ENCODE measurements at regions of chr16 and their contacts with region 1.

Region 1: GRCh38 chr16:1929578-1930337 is 11.5 kb upstream of the HS3ST6 start:
- DNase-seq: peak; percentile 83 to 99 (median 91)
- ATAC-seq: peak; percentile 100
- H3K4me3 ChIP-seq: peak overlapping the region; percentile 48
- H3K4me3 Mint-ChIP-seq: peak overlapping the region in 6 of 10 donors; percentile 30 to 82 (median 74)
- H3K27ac ChIP-seq: peak overlapping the region; percentile 64
- H3K27ac Mint-ChIP-seq: no peak overlapping the region
- H3K4me1 ChIP-seq: no peaks in the 10 kb centered on the region
- H3K4me1 Mint-ChIP-seq: peaks cover 2 to 8% (median 4%) of the 10 kb centered on the region in 7 donors
- H3K27me3 ChIP-seq: no peaks in the 10 kb centered on the region
- H3K27me3 Mint-ChIP-seq: peaks cover 0 to 3% (median 2%) of the 10 kb centered on the region in 5 donors

Region 2: GRCh38 chr16:1296688-1297412 is 632.9 kb before region 1 on chr16:
- CTCF ChIA-PET with region 1: no interaction called
- POLR2A ChIA-PET with region 1: no interaction called
- intact Hi-C with region 1: no loop called
- DNase-seq: no peak
- ATAC-seq: no peak
- H3K4me3 ChIP-seq: no peak overlapping the region
- H3K4me3 Mint-ChIP-seq: peak overlapping the region in 1 of 10 donors; percentile 5
- H3K27ac ChIP-seq: no peak overlapping the region
- H3K27ac Mint-ChIP-seq: peak overlapping the region in 1 of 9 donors; percentile 15
- H3K4me1 ChIP-seq: peaks cover 0 to 4% of the 10 kb centered on the region in 2 donors
- H3K4me1 Mint-ChIP-seq: peaks cover 0 to 9% (median 3%) of the 10 kb centered on the region in 7 donors
- H3K27me3 ChIP-seq: no peaks in the 10 kb centered on the region
- H3K27me3 Mint-ChIP-seq: peaks cover 21 to 42% (median 25%) of the 10 kb centered on the region in 5 donors

Region 3: DNA sequence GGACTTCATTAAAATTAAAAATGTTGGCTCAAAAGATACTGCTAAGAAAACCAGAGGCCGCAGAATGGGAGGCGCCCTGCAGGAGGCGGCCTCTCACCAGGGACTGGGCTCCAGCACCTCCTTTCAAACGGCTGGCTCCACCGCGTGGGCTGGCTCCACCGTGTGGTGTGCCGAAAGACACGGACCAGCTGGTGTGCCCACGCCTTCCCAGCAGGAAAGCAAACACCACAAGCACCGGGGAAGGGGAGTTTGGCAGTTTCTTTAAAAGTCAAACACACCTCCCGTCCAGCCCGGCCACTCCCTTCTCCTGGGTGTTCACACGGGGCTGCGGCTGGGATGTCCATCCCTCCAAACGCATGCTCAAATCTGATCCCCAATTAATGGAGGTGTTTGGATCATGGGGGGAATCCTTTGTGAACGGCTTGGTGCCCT is 117.0 kb before region 1 on chr16:
- CTCF ChIA-PET with region 1: no interaction called
- POLR2A ChIA-PET with region 1: no interaction called
- intact Hi-C with region 1: loop called in 1 of 2 experiments (anchors 1 kb)
- DNase-seq: peak in 8 of 9 donors; percentile 43 to 63 (median 52)
- ATAC-seq: peak; percentile 85
- H3K4me3 ChIP-seq: no peak overlapping the region
- H3K4me3 Mint-ChIP-seq: no peak overlapping the region
- H3K27ac ChIP-seq: no peak overlapping the region
- H3K27ac Mint-ChIP-seq: peak overlapping the region in 3 of 9 donors; percentile 10 to 57 (median 21)
- H3K4me1 ChIP-seq: no peaks in the 10 kb centered on the region
- H3K4me1 Mint-ChIP-seq: peaks cover 5 to 14% (median 9%) of the 10 kb centered on the region in 7 donors
- H3K27me3 ChIP-seq: no peaks in the 10 kb centered on the region
- H3K27me3 Mint-ChIP-seq: no peaks in the 10 kb centered on the region

Region 4: GRCh38 chr16:1863681-1864460 is 65.9 kb before region 1 on chr16:
- CTCF ChIA-PET with region 1: interaction called, 7 read pairs
- POLR2A ChIA-PET with region 1: no interaction called
- intact Hi-C with region 1: loop called (anchors 1 kb)
- DNase-seq: peak in 6 of 9 donors; percentile 21 to 43 (median 35)
- ATAC-seq: no peak
- H3K4me3 ChIP-seq: no peak overlapping the region
- H3K4me3 Mint-ChIP-seq: no peak overlapping the region
- H3K27ac ChIP-seq: no peak overlapping the region
- H3K27ac Mint-ChIP-seq: peak overlapping the region in 1 of 9 donors; percentile 14
- H3K4me1 ChIP-seq: no peaks in the 10 kb centered on the region
- H3K4me1 Mint-ChIP-seq: no peaks in the 10 kb centered on the region
- H3K27me3 ChIP-seq: no peaks in the 10 kb centered on the region
- H3K27me3 Mint-ChIP-seq: peaks cover 0 to 44% (median 9%) of the 10 kb centered on the region in 5 donors

Region 5: DNA sequence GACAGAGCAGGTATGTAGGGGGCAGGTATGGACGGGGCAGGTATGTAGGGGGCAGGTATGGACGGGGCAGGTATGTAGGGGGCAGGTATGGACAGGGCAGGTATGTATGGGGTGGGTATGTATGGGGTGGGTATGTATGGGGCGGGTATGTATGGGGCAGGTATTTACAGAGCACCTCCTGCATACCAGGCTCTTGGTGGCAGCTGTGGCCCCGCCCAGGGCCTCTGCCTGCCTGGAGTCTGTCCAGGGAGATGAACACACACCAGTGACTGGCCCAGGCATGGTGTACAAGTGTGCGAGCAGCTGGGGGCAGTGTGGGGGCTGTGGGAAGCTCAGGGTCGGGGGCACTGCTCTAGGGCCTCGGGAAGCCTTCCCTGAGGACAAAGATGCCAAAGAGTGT is 20.3 kb after region 1 on chr16:
- CTCF ChIA-PET with region 1: no interaction called
- POLR2A ChIA-PET with region 1: no interaction called
- intact Hi-C with region 1: no loop called
- DNase-seq: no peak
- ATAC-seq: no peak
- H3K4me3 ChIP-seq: no peak overlapping the region
- H3K4me3 Mint-ChIP-seq: no peak overlapping the region
- H3K27ac ChIP-seq: no peak overlapping the region
- H3K27ac Mint-ChIP-seq: no peak overlapping the region
- H3K4me1 ChIP-seq: no peaks in the 10 kb centered on the region
- H3K4me1 Mint-ChIP-seq: no peaks in the 10 kb centered on the region
- H3K27me3 ChIP-seq: no peaks in the 10 kb centered on the region
- H3K27me3 Mint-ChIP-seq: peaks cover 0 to 2% (median 0%) of the 10 kb centered on the region in 5 donors

Region 6: DNA sequence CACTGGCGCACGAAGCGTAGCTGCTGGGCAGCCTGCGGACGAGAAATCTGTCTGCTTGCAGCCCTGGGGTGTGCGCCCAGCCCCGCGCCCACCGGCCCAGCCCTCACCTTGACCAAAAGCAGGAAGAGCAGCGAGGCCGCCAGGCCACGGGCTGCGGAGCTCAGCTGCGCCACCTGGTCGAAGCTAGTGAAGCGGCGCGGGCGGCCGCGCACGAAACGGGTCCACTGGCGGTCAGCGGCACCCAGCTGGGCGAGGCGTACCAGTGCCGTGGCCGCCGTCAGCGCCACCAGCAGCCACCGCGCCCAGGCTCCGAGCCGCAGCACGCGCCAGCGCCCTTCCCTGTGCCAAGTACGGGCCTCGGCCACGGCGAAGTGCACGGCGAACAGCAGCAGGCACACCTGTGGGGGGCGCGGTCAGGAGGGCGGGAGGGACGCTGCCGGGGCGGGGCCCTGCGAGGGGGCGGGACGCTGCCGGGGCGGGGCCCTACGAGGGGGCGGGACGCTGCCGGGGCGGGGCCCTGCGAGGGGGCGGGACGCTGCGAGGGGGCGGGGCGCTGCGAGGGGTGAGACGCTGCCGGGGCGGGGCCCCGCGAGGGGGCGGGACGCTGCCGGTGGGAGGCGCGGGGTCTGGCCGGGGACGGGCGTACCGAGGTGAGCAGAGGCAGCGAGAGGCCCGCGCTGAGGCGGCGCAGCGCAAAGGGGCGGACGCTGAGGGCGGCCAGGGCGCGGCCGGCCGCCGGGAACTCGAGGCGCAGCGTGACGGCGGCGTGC is 161.2 kb after region 1 on chr16:
- CTCF ChIA-PET with region 1: no interaction called
- POLR2A ChIA-PET with region 1: no interaction called
- intact Hi-C with region 1: no loop called
- DNase-seq: peak in 2 of 9 donors; percentile 8 to 17
- ATAC-seq: peak; percentile 60
- H3K4me3 ChIP-seq: no peak overlapping the region
- H3K4me3 Mint-ChIP-seq: no peak overlapping the region
- H3K27ac ChIP-seq: no peak overlapping the region
- H3K27ac Mint-ChIP-seq: no peak overlapping the region
- H3K4me1 ChIP-seq: no peaks in the 10 kb centered on the region
- H3K4me1 Mint-ChIP-seq: no peaks in the 10 kb centered on the region
- H3K27me3 ChIP-seq: no peaks in the 10 kb centered on the region
- H3K27me3 Mint-ChIP-seq: no peaks in the 10 kb centered on the region

Region 7: GRCh38 chr16:2340564-2341455 is 411.1 kb after region 1 on chr16 and contains the start of gene ABCA3:
- CTCF ChIA-PET with region 1: no interaction called
- POLR2A ChIA-PET with region 1: no interaction called
- intact Hi-C with region 1: no loop called
- DNase-seq: peak; percentile 85 to 100 (median 93)
- ATAC-seq: peak; percentile 96
- H3K4me3 ChIP-seq: peak within 1 kb of the TSS; percentile 62
- H3K4me3 Mint-ChIP-seq: peak within 1 kb of the TSS; percentile 78 to 91 (median 86)
- H3K27ac ChIP-seq: peak within 1 kb of the TSS; percentile 15
- H3K27ac Mint-ChIP-seq: peak within 1 kb of the TSS in 7 of 9 donors; percentile 31 to 82 (median 64)
- H3K4me1 ChIP-seq: peaks cover 6 to 9% of the 10 kb centered on the region in 2 donors
- H3K4me1 Mint-ChIP-seq: peaks cover 9 to 19% (median 16%) of the 10 kb centered on the region in 7 donors
- H3K27me3 ChIP-seq: no peaks in the 10 kb centered on the region
- H3K27me3 Mint-ChIP-seq: peaks cover 0 to 40% (median 0%) of the 10 kb centered on the region in 5 donors
- total RNA-seq, gene ABCA3: 7.0 to 10.0 (median 8.1) TPM